A549 (cell line): ENCODE measurements at regions of chr15 and their contacts with region 1.

Region 1: GRCh38 chr15:72155635-72156616 is 37.7 kb downstream of the SENP8 start:
- DNase-seq: peak; percentile 87 to 96
- ATAC-seq: peak; percentile 94 to 97
- H3K4me3 ChIP-seq: peak overlapping the region; percentile 39
- H3K27ac ChIP-seq: peak overlapping the region; percentile 73 to 81
- H3K4me1 ChIP-seq: peaks cover 21% of the 10 kb centered on the region
- CTCF ChIP-seq: peak; percentile 99
- EP300 ChIP-seq: no peak
- POLR2A ChIP-seq: no peak
- RAD21 ChIP-seq: peak; percentile 100

Region 2: DNA sequence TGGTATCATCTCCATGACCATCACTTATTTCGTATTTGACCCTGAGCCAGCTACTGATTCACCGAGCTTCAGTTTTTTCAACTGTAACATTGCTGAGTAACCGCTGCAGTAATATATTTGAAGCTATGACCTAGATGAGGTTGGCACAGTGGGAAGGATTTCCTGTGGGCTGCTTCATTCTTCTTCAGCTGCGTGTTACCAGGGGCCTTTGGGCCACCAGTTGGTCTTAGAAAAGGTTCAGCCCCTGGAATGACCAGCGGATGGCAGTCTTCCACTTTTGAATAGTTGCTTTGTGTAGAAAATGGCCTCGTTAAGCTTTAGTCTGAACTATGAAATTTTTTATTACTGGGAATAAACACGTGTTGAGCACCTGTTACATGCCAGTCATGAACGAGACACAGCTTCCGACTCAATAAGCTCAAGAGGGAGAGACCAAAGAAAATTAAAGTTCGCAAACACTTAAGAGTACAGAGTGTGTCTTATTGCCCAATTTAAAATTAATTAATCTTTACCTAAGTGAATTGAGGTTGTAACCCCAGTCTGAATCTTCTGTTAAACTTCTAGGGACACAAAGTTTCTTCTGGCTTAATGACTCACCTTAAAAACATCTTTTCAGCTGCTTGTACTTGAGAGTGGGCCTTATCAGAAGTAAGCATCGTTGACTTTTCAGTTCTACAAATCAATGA is 403.2 kb before region 1 on chr15:
- CTCF ChIA-PET with region 1: interaction called, 43 read pairs
- POLR2A ChIA-PET with region 1: no interaction called
- DNase-seq: peak; percentile 93 to 97
- ATAC-seq: peak; percentile 82 to 84
- H3K4me3 ChIP-seq: no peak overlapping the region
- H3K27ac ChIP-seq: peak overlapping the region; percentile 84 to 99
- H3K4me1 ChIP-seq: peaks cover 55% of the 10 kb centered on the region
- CTCF ChIP-seq: peak; percentile 91
- EP300 ChIP-seq: peak; percentile 70 to 73; a peak in 2 of 5 replicates
- POLR2A ChIP-seq: no peak
- RAD21 ChIP-seq: peak; percentile 94

Region 3: DNA sequence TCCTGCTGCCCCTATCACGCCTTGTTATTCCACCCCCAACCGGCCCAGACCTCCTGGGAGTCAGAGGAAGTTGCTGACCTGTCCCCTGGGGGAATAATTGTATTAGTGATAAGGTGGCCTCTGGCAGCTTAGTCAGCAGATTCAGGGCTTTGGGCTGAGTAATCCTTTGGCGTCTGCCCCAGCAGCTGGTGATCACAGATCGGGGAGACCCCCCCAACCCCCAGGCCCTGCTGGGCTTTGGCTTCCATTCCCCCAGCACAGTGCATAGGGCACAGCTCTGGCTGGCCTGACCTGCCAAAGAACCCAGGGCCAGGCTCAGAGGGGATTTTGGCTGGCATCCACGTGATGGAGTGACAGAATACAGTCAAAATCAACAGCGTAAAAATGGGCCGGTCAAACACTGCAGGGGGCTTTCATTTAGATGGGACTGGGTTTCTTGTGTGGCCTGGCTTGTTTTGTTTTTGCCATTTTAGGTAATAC is 349.4 kb before region 1 on chr15:
- CTCF ChIA-PET with region 1: interaction called, 40 read pairs
- POLR2A ChIA-PET with region 1: no interaction called
- DNase-seq: peak in 1 of 2 experiments; percentile 49
- ATAC-seq: peak in 1 of 2 experiments; percentile 30; a peak in 3 of 6 replicates
- H3K4me3 ChIP-seq: no peak overlapping the region
- H3K27ac ChIP-seq: peak overlapping the region; percentile 77 to 84
- H3K4me1 ChIP-seq: peaks cover 48% of the 10 kb centered on the region
- CTCF ChIP-seq: no peak
- EP300 ChIP-seq: peak in 1 of 2 experiments; percentile 38; a peak in 2 of 5 replicates
- POLR2A ChIP-seq: no peak
- RAD21 ChIP-seq: no peak

Region 4: GRCh38 chr15:72130275-72130674 is 25.7 kb before region 1 on chr15:
- CTCF ChIA-PET with region 1: interaction called, 19 read pairs
- POLR2A ChIA-PET with region 1: no interaction called
- DNase-seq: no peak
- ATAC-seq: no peak
- H3K4me3 ChIP-seq: no peak overlapping the region
- H3K27ac ChIP-seq: no peak overlapping the region
- H3K4me1 ChIP-seq: peaks cover 9% of the 10 kb centered on the region; the same call in 2 of the 3 replicates
- CTCF ChIP-seq: no peak
- EP300 ChIP-seq: no peak
- POLR2A ChIP-seq: no peak
- RAD21 ChIP-seq: no peak

Region 5: DNA sequence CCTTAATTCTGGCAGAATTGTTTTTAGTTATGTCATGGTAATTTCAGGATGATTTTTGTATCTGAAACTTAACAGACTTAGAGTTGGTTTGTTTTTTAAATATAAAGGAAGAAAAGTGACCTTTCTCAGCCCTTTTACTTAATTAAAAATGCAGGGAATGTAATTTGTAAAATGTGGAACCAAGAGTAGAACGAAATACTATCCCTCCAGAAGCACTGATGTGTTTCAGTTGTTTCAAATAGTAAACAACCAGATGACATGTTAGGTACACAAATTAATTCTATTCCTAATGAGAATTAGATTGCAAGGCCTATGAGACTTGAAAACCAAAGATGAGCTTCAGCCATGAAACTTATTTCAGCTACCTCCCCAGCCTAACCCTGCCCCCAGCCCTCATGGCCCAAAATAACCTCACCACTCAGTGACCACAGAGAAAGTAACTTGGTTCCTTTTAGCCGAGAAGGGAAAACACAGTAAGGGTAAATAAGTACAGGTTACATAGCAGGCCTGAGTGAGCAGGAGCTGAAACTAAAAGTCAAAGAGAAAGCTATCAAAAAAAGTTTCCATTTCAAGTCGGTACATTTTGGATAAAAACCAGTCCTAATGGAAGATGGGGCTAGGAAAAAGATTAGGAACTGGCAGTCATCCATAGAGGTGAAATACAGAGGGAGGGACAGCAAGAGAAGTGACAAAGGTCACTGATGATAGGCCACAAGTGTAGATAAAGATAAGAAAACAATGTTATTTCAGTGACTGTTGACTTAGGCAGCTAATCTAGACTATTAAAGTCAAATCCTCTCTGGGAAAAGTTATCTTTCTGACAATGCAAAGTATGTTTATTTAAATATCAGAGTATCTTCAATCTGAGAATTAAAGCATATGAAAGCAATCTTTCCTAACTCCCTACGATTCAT is 14.5 kb before region 1 on chr15:
- CTCF ChIA-PET with region 1: interaction called, 57 read pairs
- POLR2A ChIA-PET with region 1: no interaction called
- DNase-seq: no peak
- ATAC-seq: no peak; a peak in 1 of 6 replicates
- H3K4me3 ChIP-seq: no peak overlapping the region
- H3K27ac ChIP-seq: no peak overlapping the region
- H3K4me1 ChIP-seq: peaks cover 16% of the 10 kb centered on the region
- CTCF ChIP-seq: no peak
- EP300 ChIP-seq: no peak
- POLR2A ChIP-seq: no peak
- RAD21 ChIP-seq: no peak

Region 6: GRCh38 chr15:72179959-72180823 is 24.3 kb after region 1 on chr15:
- CTCF ChIA-PET with region 1: interaction called, 29 read pairs
- POLR2A ChIA-PET with region 1: no interaction called
- DNase-seq: peak in 1 of 2 experiments; percentile 51
- ATAC-seq: peak in 1 of 2 experiments; percentile 6; a peak in 3 of 6 replicates
- H3K4me3 ChIP-seq: no peak overlapping the region
- H3K27ac ChIP-seq: peak overlapping the region in 1 of 2 experiments; percentile 16; a peak in 2 of 6 replicates
- H3K4me1 ChIP-seq: peaks cover 31% of the 10 kb centered on the region
- CTCF ChIP-seq: no peak
- EP300 ChIP-seq: no peak
- POLR2A ChIP-seq: no peak
- RAD21 ChIP-seq: no peak